ENCODE measurements at regions of chr17 and their contacts with region 1.

Region 1: GRCh38 chr17:81365148-81365600 is 30.1 kb upstream of the BAHCC1 start:
- DNase-seq: peak; percentile 77 to 85
- H3K4me3 ChIP-seq: peak overlapping the region; percentile 60
- H3K27ac ChIP-seq: peak overlapping the region; percentile 76
- H3K4me1 ChIP-seq: peaks cover 24% of the 10 kb centered on the region
- H3K27me3 ChIP-seq: no peaks in the 10 kb centered on the region
- CTCF ChIP-seq: no peak

Region 2: GRCh38 chr17:81309070-81309905 is 55.9 kb before region 1 on chr17:
- CTCF ChIA-PET with region 1: interaction called, 3 read pairs
- POLR2A ChIA-PET with region 1: interaction called, 4 read pairs
- intact Hi-C with region 1: loop called (anchors 1 kb)
- DNase-seq: peak; percentile 76 to 92
- H3K4me3 ChIP-seq: peak overlapping the region; percentile 39; the same call in 1 of the 2 replicates
- H3K27ac ChIP-seq: peak overlapping the region; percentile 38; the same call in 1 of the 2 replicates
- H3K4me1 ChIP-seq: peaks cover 11% of the 10 kb centered on the region
- H3K27me3 ChIP-seq: no peaks in the 10 kb centered on the region
- CTCF ChIP-seq: peak; percentile 66

Region 3: GRCh38 chr17:81328978-81329919 is 35.9 kb before region 1 on chr17:
- CTCF ChIA-PET with region 1: interaction called, 5 read pairs
- POLR2A ChIA-PET with region 1: interaction called, 8 read pairs
- intact Hi-C with region 1: loop called (anchors 2 kb)
- DNase-seq: peak; percentile 91 to 100
- H3K4me3 ChIP-seq: peak overlapping the region; percentile 57
- H3K27ac ChIP-seq: peak overlapping the region; percentile 90
- H3K4me1 ChIP-seq: peaks cover 54% of the 10 kb centered on the region
- H3K27me3 ChIP-seq: no peaks in the 10 kb centered on the region
- CTCF ChIP-seq: no peak

Region 4: DNA sequence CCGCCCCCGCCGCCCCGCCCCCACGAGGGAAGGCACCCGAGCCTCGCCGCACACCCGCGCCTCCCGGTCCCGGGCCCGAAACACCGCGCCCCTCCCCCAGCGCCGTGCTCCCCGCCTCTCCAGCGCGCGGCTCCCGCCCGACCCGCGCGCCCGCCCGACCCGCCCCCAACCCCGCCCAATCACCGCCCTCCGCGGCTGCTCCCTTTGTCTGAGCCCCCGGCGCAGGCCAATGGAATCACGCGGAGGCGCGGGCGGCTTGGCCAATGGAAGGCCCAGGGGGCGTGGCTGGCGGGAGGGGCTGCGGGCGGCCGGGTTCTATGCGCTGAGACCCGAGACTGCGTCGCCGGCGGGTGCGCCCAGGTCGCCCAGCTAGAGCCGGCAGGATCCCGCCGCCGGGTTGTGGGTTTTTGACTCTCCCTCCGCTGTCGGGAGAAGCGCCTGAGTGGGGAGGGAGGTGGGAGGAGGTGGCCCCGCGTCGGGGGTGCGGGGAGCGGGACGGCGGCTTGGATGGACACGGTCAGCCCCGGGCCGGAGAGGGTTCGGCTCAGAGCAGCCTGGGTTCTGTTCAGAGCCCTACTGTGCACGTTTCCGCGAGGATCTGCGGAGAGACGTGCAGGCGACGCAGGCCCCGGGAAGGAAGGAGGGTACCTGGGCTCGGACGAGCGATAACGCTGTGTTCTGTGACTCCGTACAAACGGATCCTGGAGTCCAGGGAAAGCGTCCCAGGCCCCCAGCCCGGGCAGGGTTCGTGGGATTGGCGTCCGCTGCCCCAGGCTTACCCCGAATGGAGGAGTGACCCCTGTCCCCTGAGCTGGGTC is 18.9 kb before region 1 on chr17:
- CTCF ChIA-PET with region 1: no interaction called
- POLR2A ChIA-PET with region 1: interaction called, 17 read pairs
- intact Hi-C with region 1: loop called (anchors 1 kb)
- DNase-seq: peak; percentile 81 to 99
- H3K4me3 ChIP-seq: peak overlapping the region; percentile 58
- H3K27ac ChIP-seq: no peak overlapping the region
- H3K4me1 ChIP-seq: no peaks in the 10 kb centered on the region
- H3K27me3 ChIP-seq: no peaks in the 10 kb centered on the region
- CTCF ChIP-seq: no peak

Region 5: DNA sequence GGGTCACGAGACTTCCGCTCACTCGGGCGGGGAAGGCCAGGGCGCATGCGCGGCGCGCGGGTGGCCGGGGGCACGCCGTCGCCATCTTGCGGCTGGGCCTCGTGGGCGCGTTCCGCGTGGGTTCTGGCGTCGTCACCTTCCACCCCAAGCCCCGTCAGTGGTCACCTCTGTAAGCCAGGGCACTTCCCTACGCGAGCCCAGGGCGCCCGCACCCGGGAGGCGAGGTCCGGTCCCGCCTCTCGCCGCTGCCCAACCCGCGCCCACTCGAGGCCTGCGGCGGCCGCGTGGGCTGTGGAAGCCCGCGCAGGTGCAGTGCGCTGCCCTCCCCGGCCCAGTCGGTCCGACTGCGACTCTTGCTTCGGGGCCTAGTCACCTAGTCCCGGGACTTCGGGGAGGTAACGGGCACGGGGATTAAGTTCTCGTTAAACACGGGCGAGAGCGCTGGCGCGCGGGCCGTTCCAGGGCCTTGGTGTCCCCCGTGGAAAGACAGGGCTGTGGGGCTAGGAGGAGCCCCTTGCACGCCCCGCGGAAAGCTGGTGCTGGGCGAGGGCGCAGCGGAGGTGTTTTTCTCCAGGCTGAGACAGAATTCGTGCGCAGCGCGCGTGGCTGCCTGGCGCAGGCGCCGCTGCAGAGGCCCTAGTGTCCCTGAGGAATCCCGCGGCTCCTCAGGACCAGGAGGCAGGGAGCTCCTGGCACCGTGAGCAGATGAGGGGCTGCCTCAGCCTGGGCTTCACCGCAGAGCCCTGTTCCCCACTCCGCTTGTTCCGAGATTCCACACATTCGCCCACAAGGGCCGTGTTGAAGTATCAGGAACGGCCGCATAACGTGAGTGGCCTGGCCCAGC is 506.4 kb after region 1 on chr17:
- CTCF ChIA-PET with region 1: no interaction called
- POLR2A ChIA-PET with region 1: interaction called, 11 read pairs
- intact Hi-C with region 1: no loop called
- DNase-seq: peak; percentile 47 to 91
- H3K4me3 ChIP-seq: peak overlapping the region; percentile 88
- H3K27ac ChIP-seq: peak overlapping the region; percentile 87
- H3K4me1 ChIP-seq: 0 out of 2 replicates have a peak, but pooled peaks cover 14% of the 10 kb centered on the region
- H3K27me3 ChIP-seq: no peaks in the 10 kb centered on the region
- CTCF ChIP-seq: no peak; the same call in 1 of the 2 replicates

Measured in PC-9 (cell line).